Activated B cell treated with CpG ODN at 0.5 μM for 24 hours (primary cell): ENCODE measurements at regions of chr17 and their contacts with region 1.

Region 1: DNA sequence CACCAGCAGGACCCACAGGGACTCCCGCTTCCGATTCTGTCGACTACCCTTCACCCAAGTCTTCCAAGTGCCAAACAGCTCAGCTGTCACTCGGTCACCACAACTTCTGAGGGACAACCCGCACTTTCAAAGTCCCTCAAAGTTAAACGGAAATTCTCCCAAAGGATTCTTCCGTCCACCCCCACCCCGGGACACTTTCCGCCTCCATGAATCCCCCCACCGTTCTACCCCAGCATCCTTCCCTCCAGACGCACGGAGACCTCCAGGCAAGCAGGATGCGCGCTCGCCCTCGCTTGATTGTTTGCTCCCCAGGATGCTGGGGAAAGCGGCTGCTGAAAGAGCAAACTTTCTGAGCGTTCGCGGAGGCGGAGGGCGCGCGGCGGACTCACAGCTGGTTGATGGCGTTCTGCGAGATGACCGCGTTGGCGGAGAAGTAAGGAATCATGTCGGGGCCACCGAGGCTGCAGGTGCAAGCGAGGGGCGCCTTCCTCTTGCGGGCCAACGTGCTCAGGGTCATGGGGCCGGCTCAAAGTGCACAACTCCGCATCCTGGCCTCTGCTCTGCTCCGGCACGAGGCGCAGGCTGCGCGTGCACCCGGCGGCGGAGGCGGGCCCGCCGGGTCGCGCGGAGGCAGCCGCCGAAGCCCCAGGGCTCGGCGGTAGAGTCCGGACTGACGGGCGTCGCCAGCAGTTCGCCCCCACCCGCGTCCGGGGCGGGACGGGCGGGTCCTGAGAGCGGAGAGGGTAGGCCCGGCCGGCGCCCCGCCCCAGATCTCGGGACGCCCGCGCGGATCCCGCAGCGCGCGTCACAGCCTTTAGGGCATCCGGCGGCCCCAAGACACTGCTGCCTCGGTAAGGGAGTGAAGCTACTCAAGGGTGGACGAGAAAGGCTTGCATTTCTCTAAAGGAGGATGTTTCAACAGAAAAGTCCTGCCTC is 138.3 kb upstream of the CORO6 start:
- DNase-seq: peak; percentile 95
- ATAC-seq: peak; percentile 86
- H3K4me3 Mint-ChIP-seq: peak overlapping the region; percentile 93
- H3K27ac Mint-ChIP-seq: peak overlapping the region; percentile 91
- H3K4me1 Mint-ChIP-seq: peaks cover 43% of the 10 kb centered on the region
- H3K27me3 Mint-ChIP-seq: no peaks in the 10 kb centered on the region
- CTCF ChIP-seq: no peak

Region 2: GRCh38 chr17:29568331-29569244 is 192.4 kb before region 1 on chr17 and contains the start of gene TP53I13:
- CTCF ChIA-PET with region 1: no interaction called
- POLR2A ChIA-PET with region 1: no interaction called
- intact Hi-C with region 1: loop called (anchors 2 kb)
- DNase-seq: peak; percentile 83
- ATAC-seq: peak; percentile 65
- H3K4me3 Mint-ChIP-seq: peak within 1 kb of the TSS; percentile 97
- H3K27ac Mint-ChIP-seq: peak within 1 kb of the TSS; percentile 97
- H3K4me1 Mint-ChIP-seq: peaks cover 32% of the 10 kb centered on the region
- H3K27me3 Mint-ChIP-seq: no peaks in the 10 kb centered on the region
- CTCF ChIP-seq: no peak
- total RNA-seq, gene TP53I13: 65.1 and 71.2 TPM in 2 replicates

Region 3: GRCh38 chr17:29640413-29640812 is 120.6 kb before region 1 on chr17:
- CTCF ChIA-PET with region 1: interaction called, 13 read pairs
- POLR2A ChIA-PET with region 1: interaction called, 20 read pairs
- intact Hi-C with region 1: loop called (anchors 1 kb)
- DNase-seq: no peak
- ATAC-seq: no peak
- H3K4me3 Mint-ChIP-seq: no peak overlapping the region
- H3K27ac Mint-ChIP-seq: peak overlapping the region; percentile 89
- H3K4me1 Mint-ChIP-seq: peaks cover 32% of the 10 kb centered on the region
- H3K27me3 Mint-ChIP-seq: no peaks in the 10 kb centered on the region
- CTCF ChIP-seq: no peak

Region 4: DNA sequence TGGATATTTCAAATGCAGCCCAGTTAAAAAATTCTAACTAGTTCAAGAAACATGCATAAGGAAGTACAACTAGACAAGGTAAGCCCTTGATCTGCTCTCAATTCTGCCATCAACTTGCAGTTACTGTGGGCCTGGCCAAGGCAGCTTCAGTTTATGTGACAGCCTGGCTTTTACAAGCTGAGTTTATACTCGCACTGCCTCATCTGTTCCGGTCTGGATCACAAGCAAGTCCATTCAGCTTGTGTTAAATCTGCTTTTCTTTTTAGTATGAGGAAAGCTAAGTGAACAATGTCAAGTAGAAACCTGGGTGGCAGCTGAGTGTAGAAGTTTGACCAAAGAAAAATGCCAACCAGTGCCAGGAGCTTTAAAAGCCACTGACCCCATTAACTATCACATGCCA is 61.7 kb before region 1 on chr17:
- CTCF ChIA-PET with region 1: no interaction called
- POLR2A ChIA-PET with region 1: interaction called, 74 read pairs
- intact Hi-C with region 1: no loop called
- DNase-seq: no peak
- ATAC-seq: peak; percentile 21
- H3K4me3 Mint-ChIP-seq: no peak overlapping the region
- H3K27ac Mint-ChIP-seq: peak overlapping the region; percentile 19
- H3K4me1 Mint-ChIP-seq: peaks cover 33% of the 10 kb centered on the region
- H3K27me3 Mint-ChIP-seq: no peaks in the 10 kb centered on the region
- CTCF ChIP-seq: no peak

Region 5: DNA sequence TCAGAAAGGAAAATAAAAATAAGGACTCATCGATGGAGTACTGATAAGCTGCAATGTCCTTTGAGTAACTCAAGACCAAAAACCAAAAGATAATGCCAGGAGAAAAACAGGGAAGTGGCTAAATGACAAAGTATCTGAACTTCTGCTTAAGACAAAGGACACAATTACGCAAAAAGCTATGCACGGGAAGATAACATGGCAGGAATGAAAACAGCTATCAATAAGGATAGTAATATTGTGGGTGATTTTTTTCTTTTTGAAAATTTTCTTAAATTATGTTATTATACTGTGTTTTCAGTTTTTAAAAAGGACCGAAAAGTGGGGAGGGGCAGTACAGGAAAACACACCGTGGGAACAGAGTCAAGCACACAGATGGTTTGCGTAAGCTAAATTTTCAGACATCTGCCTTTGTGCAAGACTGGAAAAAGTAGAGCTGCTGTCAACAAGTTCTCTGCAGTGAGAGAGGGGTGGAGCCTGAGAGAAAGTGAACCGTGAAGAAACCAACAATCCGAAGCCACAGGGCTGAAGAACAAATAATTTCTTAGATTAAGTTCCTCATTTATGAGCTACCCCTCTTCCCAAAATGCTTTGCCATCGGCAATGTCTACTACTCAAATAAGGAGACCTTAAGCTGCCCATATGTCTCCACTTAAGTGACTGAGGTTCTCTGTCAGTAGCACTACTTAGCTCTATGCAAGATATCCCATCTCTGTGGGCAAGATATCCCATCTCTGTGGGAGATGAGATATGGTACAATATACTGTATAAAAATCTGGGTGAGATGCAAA is 38.4 kb before region 1 on chr17:
- CTCF ChIA-PET with region 1: interaction called, 11 read pairs
- POLR2A ChIA-PET with region 1: interaction called, 86 read pairs
- intact Hi-C with region 1: loop called (anchors 1 kb)
- DNase-seq: no peak
- ATAC-seq: peak; percentile 85
- H3K4me3 Mint-ChIP-seq: peak overlapping the region; percentile 60
- H3K27ac Mint-ChIP-seq: peak overlapping the region; percentile 89
- H3K4me1 Mint-ChIP-seq: peaks cover 92% of the 10 kb centered on the region
- H3K27me3 Mint-ChIP-seq: no peaks in the 10 kb centered on the region
- CTCF ChIP-seq: no peak

Region 6: GRCh38 chr17:29747660-29748059 is 13.4 kb before region 1 on chr17:
- CTCF ChIA-PET with region 1: interaction called, 8 read pairs
- POLR2A ChIA-PET with region 1: interaction called, 49 read pairs
- intact Hi-C with region 1: loop called (anchors 2 kb)
- DNase-seq: no peak
- ATAC-seq: no peak
- H3K4me3 Mint-ChIP-seq: no peak overlapping the region
- H3K27ac Mint-ChIP-seq: peak overlapping the region; percentile 24
- H3K4me1 Mint-ChIP-seq: peaks cover 71% of the 10 kb centered on the region
- H3K27me3 Mint-ChIP-seq: no peaks in the 10 kb centered on the region
- CTCF ChIP-seq: no peak

Region 7: GRCh38 chr17:29777663-29778062 is 16.6 kb after region 1 on chr17:
- CTCF ChIA-PET with region 1: interaction called, 5 read pairs
- POLR2A ChIA-PET with region 1: interaction called, 30 read pairs
- intact Hi-C with region 1: loop called (anchors 2 kb)
- DNase-seq: no peak
- ATAC-seq: no peak
- H3K4me3 Mint-ChIP-seq: no peak overlapping the region
- H3K27ac Mint-ChIP-seq: no peak overlapping the region
- H3K4me1 Mint-ChIP-seq: peaks cover 14% of the 10 kb centered on the region
- H3K27me3 Mint-ChIP-seq: no peaks in the 10 kb centered on the region
- CTCF ChIP-seq: no peak